Dendritic cell treated with granulocyte-macrophage colony-stimulating factor and Interleukin-4, amounts not matched to agents 40 ng/mL and 50 ng/mL, for 4 days (primary cell): ENCODE measurements at regions of chr2 and their contacts with region 1.

Region 1: GRCh38 chr2:41869542-41870264 is 178.1 kb upstream of the PKDCC start:
- H3K4me3 Mint-ChIP-seq: no peak overlapping the region
- H3K27ac Mint-ChIP-seq: no peak overlapping the region
- H3K4me1 Mint-ChIP-seq: no peaks in the 10 kb centered on the region
- H3K27me3 Mint-ChIP-seq: peaks cover 25% of the 10 kb centered on the region

Region 2: GRCh38 chr2:41907771-41908207 is 38.1 kb after region 1 on chr2:
- intact Hi-C with region 1: no loop called
- H3K4me3 Mint-ChIP-seq: no peak overlapping the region
- H3K27ac Mint-ChIP-seq: no peak overlapping the region
- H3K4me1 Mint-ChIP-seq: no peaks in the 10 kb centered on the region
- H3K27me3 Mint-ChIP-seq: peaks cover 21% of the 10 kb centered on the region

Region 3: DNA sequence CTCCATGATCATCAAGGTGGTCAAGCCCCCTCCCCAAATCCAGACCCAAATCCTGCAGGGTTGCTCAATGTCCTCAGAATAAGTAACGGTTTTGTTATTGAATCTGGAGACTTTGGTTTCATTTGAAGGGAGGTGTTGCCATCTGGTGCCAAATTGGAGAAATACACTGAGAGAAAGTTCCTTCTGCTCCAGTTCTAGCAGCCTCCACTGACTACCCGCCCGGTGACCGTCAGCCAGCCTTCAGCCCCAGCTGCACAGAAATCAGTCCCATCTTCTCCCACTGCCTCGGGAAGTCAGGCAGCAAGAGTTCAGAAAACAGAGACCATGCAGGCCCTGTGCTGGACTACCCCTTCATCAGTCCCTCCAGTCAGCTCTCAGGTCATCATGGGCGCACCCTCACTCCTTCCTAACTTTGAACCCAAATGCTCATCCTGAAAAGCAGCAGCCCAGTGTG is 216.8 kb after region 1 on chr2:
- intact Hi-C with region 1: loop called (anchors 1 kb)
- H3K4me3 Mint-ChIP-seq: no peak overlapping the region
- H3K27ac Mint-ChIP-seq: no peak overlapping the region
- H3K4me1 Mint-ChIP-seq: peaks cover 6% of the 10 kb centered on the region
- H3K27me3 Mint-ChIP-seq: peaks cover 17% of the 10 kb centered on the region

Region 4: GRCh38 chr2:42238644-42239288 is 369.1 kb after region 1 on chr2:
- intact Hi-C with region 1: loop called (anchors 10 kb)
- H3K4me3 Mint-ChIP-seq: no peak overlapping the region
- H3K27ac Mint-ChIP-seq: no peak overlapping the region
- H3K4me1 Mint-ChIP-seq: peaks cover 26% of the 10 kb centered on the region
- H3K27me3 Mint-ChIP-seq: no peaks in the 10 kb centered on the region